Lower lobe of right lung (tissue), 2 donors: ENCODE measurements at regions of chr11 and their contacts with region 1.

Region 1: GRCh38 chr11:19553683-19554333 is 158.8 kb upstream of the NAV2 start:
- DNase-seq: peak; percentile 83
- ATAC-seq: peak; percentile 75 to 81
- H3K4me3 ChIP-seq: no peak overlapping the region
- H3K27ac ChIP-seq: no peak overlapping the region
- H3K4me1 ChIP-seq: peaks cover 16% of the 10 kb centered on the region
- H3K27me3 ChIP-seq: no peaks in the 10 kb centered on the region
- CTCF ChIP-seq: peak; percentile 88

Region 2: DNA sequence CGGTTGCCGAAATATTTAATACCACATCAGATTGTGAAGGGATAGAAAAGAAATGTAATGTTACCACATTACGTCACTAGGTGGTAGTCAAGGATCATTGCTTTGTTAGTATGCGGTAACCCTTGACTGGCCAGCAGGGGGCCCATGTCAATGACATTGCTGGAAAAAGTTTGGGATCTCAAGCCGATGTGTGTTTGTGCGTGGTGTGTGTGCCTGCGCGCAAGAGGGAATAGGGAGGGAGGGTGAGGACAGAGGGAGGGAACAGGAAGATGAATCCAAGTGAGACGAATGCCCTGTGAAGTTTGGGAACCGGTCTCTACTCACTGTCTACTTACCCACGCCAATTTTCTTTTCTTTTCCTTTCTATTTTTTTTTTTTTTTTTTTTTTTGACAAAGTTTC is 482.6 kb before region 1 on chr11:
- intact Hi-C with region 1: loop called (anchors 10 kb)
- DNase-seq: peak; percentile 73
- ATAC-seq: peak; percentile 86 to 94
- H3K4me3 ChIP-seq: peak overlapping the region; percentile 11
- H3K27ac ChIP-seq: no peak overlapping the region
- H3K4me1 ChIP-seq: no peaks in the 10 kb centered on the region
- H3K27me3 ChIP-seq: peaks cover 4% of the 10 kb centered on the region
- CTCF ChIP-seq: peak; percentile 80

Region 3: GRCh38 chr11:19311308-19312030 is 242.3 kb before region 1 on chr11:
- intact Hi-C with region 1: loop called (anchors 10 kb)
- DNase-seq: no peak
- ATAC-seq: peak; percentile 83 to 91
- H3K4me3 ChIP-seq: no peak overlapping the region
- H3K27ac ChIP-seq: no peak overlapping the region
- H3K4me1 ChIP-seq: peaks cover 6% of the 10 kb centered on the region
- H3K27me3 ChIP-seq: no peaks in the 10 kb centered on the region
- CTCF ChIP-seq: peak; percentile 78